Uterus (tissue), 4 donors: ENCODE measurements at regions of chr7 and their contacts with region 1.

Region 1: GRCh38 chr7:36986429-36987362 is 262.4 kb upstream of the AOAH start:
- DNase-seq: peak; percentile 28 to 43
- H3K4me3 ChIP-seq: no peak overlapping the region
- H3K27ac ChIP-seq: no peak overlapping the region
- H3K4me1 ChIP-seq: no peaks in the 10 kb centered on the region
- H3K27me3 ChIP-seq: no peaks in the 10 kb centered on the region
- CTCF ChIP-seq: peak; percentile 50 to 65 (median 61)
- POLR2A ChIP-seq: no peak

Region 2: DNA sequence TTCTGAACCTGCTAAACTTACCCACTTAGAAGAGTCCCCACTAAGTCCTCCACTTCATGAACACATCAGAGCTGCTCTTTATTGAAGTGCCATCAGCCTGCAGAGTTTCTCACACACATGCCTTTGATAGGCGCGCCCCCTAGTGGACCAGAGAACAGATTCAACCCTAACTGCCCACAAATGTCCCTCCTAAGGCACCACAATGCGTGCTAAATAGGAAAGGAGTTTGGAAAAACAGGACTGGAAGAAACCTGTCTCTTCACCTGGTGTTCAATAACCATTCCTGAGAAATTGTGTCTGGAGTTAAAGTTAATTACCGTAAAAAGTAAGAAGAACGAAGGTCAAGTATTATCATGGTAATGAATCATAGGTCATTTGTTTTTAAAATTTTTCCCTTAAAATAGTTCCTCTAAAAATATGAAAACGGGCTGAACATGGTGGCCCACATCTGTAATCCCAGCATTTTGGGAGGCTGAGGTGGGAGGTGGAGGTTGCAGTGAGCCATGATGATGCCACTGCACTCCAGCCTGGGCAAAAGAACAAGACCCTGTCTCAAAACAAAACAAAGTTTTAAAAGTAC is 212.3 kb after region 1 on chr7:
- intact Hi-C with region 1: loop called (anchors 10 kb)
- DNase-seq: peak; percentile 70 to 72
- H3K4me3 ChIP-seq: no peak overlapping the region
- H3K27ac ChIP-seq: no peak overlapping the region
- H3K4me1 ChIP-seq: no peaks in the 10 kb centered on the region
- H3K27me3 ChIP-seq: no peaks in the 10 kb centered on the region
- CTCF ChIP-seq: peak; percentile 63 to 76 (median 72)
- POLR2A ChIP-seq: no peak